ENCODE measurements at regions of chr2 and their contacts with region 1.

Region 1: DNA sequence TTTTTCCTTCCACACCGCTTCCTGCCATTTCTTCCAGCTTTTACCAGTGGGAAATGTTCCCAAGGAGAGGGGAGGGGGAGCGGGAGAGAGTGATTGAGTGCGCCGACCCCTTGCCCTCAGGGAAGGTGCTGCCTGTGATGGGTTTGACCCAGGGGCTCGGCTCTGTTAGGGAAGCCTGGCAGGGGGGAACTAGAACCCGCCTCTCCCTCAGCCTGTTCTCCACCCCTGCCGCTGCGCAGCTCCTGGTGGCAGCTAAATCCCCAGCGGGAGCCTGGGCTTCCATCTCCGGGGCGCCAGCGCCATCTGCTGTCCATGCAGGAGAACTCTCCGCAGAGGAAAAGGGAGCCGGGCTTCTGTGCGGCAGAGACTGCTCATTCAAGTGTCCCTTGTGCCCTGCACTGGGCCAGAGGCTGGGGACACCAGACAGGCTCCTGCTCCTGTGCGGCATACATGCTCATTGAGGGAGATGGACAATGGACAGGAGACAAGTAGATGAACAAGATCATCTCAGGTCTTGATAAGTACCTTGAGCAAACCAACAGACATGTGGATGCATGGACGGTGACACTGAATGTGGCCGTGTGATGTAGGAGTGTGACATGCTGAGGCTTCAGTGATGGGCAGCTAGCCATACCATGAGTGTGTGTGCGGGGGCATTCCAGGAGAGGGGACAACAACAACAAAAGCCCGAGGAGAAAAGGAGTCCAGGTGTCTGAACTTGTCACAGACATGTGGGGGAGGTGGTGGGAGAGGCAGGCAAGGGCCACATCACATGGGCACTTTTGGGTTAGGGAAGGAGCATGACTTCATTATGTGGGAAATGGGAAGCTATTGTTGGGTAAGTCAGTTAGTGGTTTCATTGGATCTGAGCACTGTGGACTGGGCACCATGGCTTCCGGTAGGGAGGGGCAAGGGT is 13.3 kb downstream of the CHPF start:
- DNase-seq: no peak
- H3K4me3 ChIP-seq: peak overlapping the region; percentile 11 to 32 (median 29)
- H3K27ac ChIP-seq: peak overlapping the region in 1 of 4 donors; percentile 45
- H3K4me1 ChIP-seq: peaks cover 9 to 19% (median 15%) of the 10 kb centered on the region in 4 donors
- H3K27me3 ChIP-seq: peaks cover 0 to 37% (median 0%) of the 10 kb centered on the region in 4 donors
- CTCF ChIP-seq: peak; percentile 96 to 99 (median 97)
- EP300 ChIP-seq: no peak
- POLR2A ChIP-seq: no peak

Region 2: DNA sequence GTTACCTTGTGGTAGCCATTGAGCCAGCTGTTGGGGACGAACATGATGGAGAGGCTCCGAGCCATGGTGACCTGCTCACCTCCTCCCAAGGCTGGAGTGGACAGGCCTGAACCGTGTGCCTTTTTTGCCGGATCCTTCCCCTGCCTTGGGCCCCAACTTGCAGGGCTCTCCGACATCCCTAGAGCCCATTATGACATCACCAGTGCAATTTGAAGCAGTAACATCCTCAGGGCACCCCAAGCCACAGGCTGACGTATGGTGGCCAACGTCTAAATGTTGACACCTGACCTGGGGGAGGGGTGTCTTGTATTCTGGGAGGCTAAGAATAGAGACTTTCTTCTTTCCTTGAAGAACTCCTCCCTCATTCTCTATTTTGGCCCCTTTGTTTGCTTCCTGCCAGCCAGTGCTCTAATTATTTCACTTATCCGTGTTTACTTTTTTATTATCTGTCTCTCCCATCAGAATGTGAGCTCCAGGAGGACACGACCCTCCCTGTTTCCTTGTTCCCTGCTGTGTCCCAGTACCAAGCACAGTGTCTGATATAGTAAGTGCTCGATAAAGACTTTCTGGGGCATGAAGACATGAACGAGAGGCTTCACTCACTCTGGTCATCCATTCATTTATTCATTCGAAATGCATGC is 130.3 kb before region 1 on chr2:
- intact Hi-C with region 1: loop called (anchors 2 kb)
- DNase-seq: no peak
- H3K4me3 ChIP-seq: no peak overlapping the region
- H3K27ac ChIP-seq: peak overlapping the region in 1 of 4 donors; percentile 54
- H3K4me1 ChIP-seq: peaks cover 24 to 45% (median 40%) of the 10 kb centered on the region in 4 donors
- H3K27me3 ChIP-seq: no peaks in the 10 kb centered on the region
- CTCF ChIP-seq: no peak
- EP300 ChIP-seq: no peak
- POLR2A ChIP-seq: no peak

Region 3: GRCh38 chr2:219475697-219476651 is 54.3 kb before region 1 on chr2:
- intact Hi-C with region 1: loop called (anchors 5 kb)
- DNase-seq: no peak
- H3K4me3 ChIP-seq: no peak overlapping the region
- H3K27ac ChIP-seq: peak overlapping the region; percentile 62 to 99 (median 94)
- H3K4me1 ChIP-seq: peaks cover 8 to 61% (median 40%) of the 10 kb centered on the region in 4 donors
- H3K27me3 ChIP-seq: peaks cover 0 to 5% (median 0%) of the 10 kb centered on the region in 4 donors
- CTCF ChIP-seq: peak; percentile 88 to 93 (median 91)
- EP300 ChIP-seq: no peak
- POLR2A ChIP-seq: no peak

Region 4: GRCh38 chr2:219498280-219499057 is 31.8 kb before region 1 on chr2 and contains the start of gene GMPPA:
- intact Hi-C with region 1: loop called (anchors 5 kb)
- DNase-seq: peak; percentile 99
- H3K4me3 ChIP-seq: peak within 1 kb of the TSS; percentile 65 to 77 (median 72)
- H3K27ac ChIP-seq: peak within 1 kb of the TSS; percentile 97 to 99 (median 97)
- H3K4me1 ChIP-seq: peaks cover 28 to 77% (median 65%) of the 10 kb centered on the region in 4 donors
- H3K27me3 ChIP-seq: peaks cover 0 to 13% (median 0%) of the 10 kb centered on the region in 4 donors
- CTCF ChIP-seq: peak in 2 of 3 experiments; percentile 11 to 32
- EP300 ChIP-seq: no peak
- POLR2A ChIP-seq: peak; percentile 59
- total RNA-seq, gene GMPPA: 16.2 to 32.6 (median 19.9) TPM

Region 5: GRCh38 chr2:219612577-219613286 is 82.4 kb after region 1 on chr2:
- intact Hi-C with region 1: no loop called
- DNase-seq: no peak
- H3K4me3 ChIP-seq: no peak overlapping the region
- H3K27ac ChIP-seq: no peak overlapping the region
- H3K4me1 ChIP-seq: peaks cover 4 to 17% (median 15%) of the 10 kb centered on the region in 4 donors
- H3K27me3 ChIP-seq: no peaks in the 10 kb centered on the region
- CTCF ChIP-seq: no peak
- EP300 ChIP-seq: no peak
- POLR2A ChIP-seq: no peak

Region 6: DNA sequence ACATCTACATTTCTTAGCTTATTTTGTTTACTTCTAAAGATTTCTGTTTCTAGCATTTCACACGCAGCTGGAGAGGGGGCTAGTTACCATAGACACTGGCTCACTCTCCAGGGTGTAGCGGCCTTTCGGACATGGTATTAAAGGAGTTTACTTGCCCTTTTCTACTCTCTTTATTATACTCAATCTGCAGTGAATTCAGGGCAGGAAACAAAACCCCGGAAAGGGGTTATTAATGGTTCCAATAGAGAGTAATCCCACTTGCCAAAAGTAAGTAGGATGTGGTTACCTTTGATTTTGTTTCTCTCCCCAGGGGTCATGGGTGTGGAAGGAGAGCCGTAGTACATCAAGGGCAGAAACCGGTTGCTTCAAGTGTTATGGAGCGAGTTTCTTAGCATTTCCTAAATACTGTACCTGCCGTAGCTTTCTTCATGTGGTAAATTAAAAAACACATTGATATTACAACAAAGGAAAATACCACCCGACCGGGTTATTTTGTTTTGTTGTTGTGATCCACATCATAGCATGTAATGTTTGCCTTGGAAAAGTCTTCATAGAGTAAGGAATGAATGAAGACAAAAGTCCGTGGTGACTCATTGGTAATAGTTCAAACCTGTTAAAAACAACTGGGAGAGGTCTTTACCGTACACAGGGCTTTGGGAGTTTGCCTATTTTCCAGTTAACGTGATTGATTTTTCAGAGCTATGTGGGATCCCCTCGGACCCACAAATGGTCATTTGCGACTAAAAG is 168.6 kb after region 1 on chr2:
- intact Hi-C with region 1: no loop called
- DNase-seq: no peak
- H3K4me3 ChIP-seq: no peak overlapping the region
- H3K27ac ChIP-seq: no peak overlapping the region
- H3K4me1 ChIP-seq: peaks cover 0 to 19% (median 10%) of the 10 kb centered on the region in 4 donors
- H3K27me3 ChIP-seq: peaks cover 0 to 16% (median 0%) of the 10 kb centered on the region in 4 donors
- CTCF ChIP-seq: no peak
- EP300 ChIP-seq: no peak
- POLR2A ChIP-seq: no peak

Region 7: DNA sequence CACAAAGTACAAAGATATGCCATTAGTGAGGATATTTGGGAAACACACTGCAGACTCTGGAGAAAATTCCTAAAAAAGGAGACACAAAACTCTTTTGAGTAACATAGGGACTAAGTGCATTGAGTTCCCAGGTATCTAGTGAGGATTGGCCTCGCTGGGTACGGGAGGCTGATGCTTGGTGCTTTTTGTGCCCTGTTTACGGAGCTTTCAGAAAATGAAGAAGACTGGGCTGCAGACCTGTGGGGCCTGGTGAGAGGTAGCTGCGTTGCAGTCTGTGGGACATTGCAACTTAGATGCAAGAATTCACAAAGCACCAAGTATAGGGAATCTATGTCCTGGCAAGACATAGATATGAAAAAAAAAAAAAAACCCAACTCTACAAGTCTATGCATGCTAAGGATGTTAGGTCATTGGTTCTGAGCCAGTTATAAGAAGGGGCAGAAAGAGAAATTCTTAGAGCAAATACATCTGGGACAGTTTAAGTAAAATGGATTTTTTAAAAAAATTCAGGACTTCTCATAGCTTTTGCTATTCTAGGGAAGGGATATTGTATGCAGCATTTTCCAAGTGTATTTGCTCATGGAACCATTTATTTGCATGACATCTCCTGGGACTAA is 253.2 kb after region 1 on chr2:
- intact Hi-C with region 1: no loop called
- DNase-seq: no peak
- H3K4me3 ChIP-seq: no peak overlapping the region
- H3K27ac ChIP-seq: no peak overlapping the region
- H3K4me1 ChIP-seq: no peaks in the 10 kb centered on the region
- H3K27me3 ChIP-seq: no peaks in the 10 kb centered on the region
- CTCF ChIP-seq: no peak
- EP300 ChIP-seq: no peak
- POLR2A ChIP-seq: no peak